ENCODE measurements at regions of chrX and their contacts with region 1.

Region 1: DNA sequence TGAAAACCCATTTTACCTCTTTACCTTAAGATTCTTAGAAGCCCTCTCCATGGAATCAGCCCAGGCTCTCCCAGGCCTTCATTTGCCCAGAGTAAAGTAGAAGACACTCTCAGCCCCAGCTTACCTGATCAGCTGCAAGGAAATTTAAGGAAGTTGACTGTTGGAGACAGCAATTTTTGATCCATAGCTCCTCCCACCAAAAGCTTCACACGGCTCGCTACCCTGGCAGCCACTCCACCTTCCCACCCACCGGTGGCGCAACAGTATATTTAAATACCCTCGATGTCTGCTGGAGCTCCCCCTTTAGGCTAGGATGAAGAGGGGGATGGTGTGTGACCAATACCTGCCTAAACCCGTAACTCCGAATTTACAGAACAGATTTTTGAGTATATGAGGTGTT is 75.4 kb downstream of the MBNL3 start:
- DNase-seq: peak; percentile 74
- H3K4me3 ChIP-seq: peak overlapping the region; percentile 32
- H3K4me3 Mint-ChIP-seq: peak overlapping the region; percentile 73
- H3K27ac Mint-ChIP-seq: peak overlapping the region; percentile 93
- H3K4me1 ChIP-seq: peaks cover 28% of the 10 kb centered on the region
- H3K4me1 Mint-ChIP-seq: peaks cover 8% of the 10 kb centered on the region
- H3K27me3 ChIP-seq: no peaks in the 10 kb centered on the region
- H3K27me3 Mint-ChIP-seq: no peaks in the 10 kb centered on the region
- CTCF ChIP-seq: peak; percentile 34 to 43

Region 2: DNA sequence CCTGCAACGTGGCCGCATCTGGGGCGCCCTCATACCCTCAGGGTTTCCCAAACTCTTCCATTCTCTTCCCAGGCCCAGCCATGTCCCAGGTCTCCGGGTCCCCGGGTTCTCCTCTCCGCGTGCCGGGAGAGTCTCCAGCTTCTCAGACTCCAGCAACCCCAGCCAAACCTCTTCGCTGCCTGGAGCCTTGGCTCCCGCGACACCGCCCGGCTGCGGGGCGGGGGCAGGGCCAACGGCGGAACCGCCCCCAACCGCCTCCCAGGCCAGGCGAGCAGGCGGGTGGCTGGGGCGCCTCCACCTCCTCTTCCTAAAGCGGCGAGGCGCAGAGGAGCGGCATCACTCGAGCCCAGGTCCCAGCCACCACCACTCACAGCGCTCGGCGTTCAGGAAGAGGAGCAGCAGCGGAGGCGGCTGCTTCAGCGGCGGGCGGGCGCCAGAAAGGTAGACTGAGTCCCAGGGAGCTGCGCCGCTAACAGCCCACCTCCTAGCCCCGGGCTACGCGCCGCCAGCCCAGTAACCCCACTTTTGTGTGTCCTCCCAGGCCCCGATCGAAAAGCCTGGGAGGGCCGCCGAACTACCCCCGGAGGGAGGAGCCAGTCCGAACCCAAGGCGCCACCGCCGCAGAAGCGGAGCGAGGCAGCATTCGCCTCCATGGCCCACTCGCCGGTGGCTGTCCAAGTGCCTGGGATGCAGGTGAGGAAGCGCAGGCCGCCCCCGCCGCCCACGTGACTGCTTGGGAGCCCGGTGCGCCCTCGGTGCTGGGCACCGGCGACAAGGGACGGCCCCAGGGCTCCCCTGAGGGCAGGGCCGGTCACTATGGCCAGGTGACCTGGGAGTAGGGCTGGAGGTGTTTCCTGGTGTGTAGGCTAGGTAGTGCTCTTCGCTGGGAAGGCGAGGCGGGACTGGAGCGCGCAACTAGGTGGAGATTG is 390.2 kb before region 1 on chrX and contains the start of gene STK26:
- CTCF ChIA-PET with region 1: no interaction called
- POLR2A ChIA-PET with region 1: no interaction called
- intact Hi-C with region 1: loop called (anchors 2 kb)
- DNase-seq: peak; percentile 79 to 86
- H3K4me3 ChIP-seq: peak within 1 kb of the TSS; percentile 79
- H3K4me3 Mint-ChIP-seq: peak within 1 kb of the TSS; percentile 88
- H3K27ac Mint-ChIP-seq: peak within 1 kb of the TSS; percentile 89
- H3K4me1 ChIP-seq: peaks cover 3% of the 10 kb centered on the region; the same call in 1 of the 2 replicates
- H3K4me1 Mint-ChIP-seq: peaks cover 13% of the 10 kb centered on the region
- H3K27me3 ChIP-seq: no peaks in the 10 kb centered on the region
- H3K27me3 Mint-ChIP-seq: no peaks in the 10 kb centered on the region
- CTCF ChIP-seq: no peak
- total RNA-seq, gene STK26: 36.8 and 37.1 TPM in 2 replicates

Region 3: GRCh38 chrX:132226169-132226568 is 187.3 kb before region 1 on chrX:
- CTCF ChIA-PET with region 1: interaction called, 3 read pairs
- POLR2A ChIA-PET with region 1: no interaction called
- intact Hi-C with region 1: loop called (anchors 5 kb)
- DNase-seq: no peak
- H3K4me3 ChIP-seq: no peak overlapping the region
- H3K4me3 Mint-ChIP-seq: no peak overlapping the region
- H3K27ac Mint-ChIP-seq: no peak overlapping the region
- H3K4me1 ChIP-seq: no peaks in the 10 kb centered on the region
- H3K4me1 Mint-ChIP-seq: peaks cover 10% of the 10 kb centered on the region
- H3K27me3 ChIP-seq: no peaks in the 10 kb centered on the region
- H3K27me3 Mint-ChIP-seq: no peaks in the 10 kb centered on the region
- CTCF ChIP-seq: peak; percentile 32 to 34

Region 4: GRCh38 chrX:132330117-132330729 is 83.2 kb before region 1 on chrX:
- CTCF ChIA-PET with region 1: no interaction called
- POLR2A ChIA-PET with region 1: no interaction called
- intact Hi-C with region 1: loop called (anchors 1 kb)
- DNase-seq: peak; percentile 11 to 33
- H3K4me3 ChIP-seq: no peak overlapping the region
- H3K4me3 Mint-ChIP-seq: no peak overlapping the region
- H3K27ac Mint-ChIP-seq: no peak overlapping the region
- H3K4me1 ChIP-seq: peaks cover 26% of the 10 kb centered on the region
- H3K4me1 Mint-ChIP-seq: peaks cover 33% of the 10 kb centered on the region
- H3K27me3 ChIP-seq: no peaks in the 10 kb centered on the region
- H3K27me3 Mint-ChIP-seq: no peaks in the 10 kb centered on the region
- CTCF ChIP-seq: no peak

Region 5: DNA sequence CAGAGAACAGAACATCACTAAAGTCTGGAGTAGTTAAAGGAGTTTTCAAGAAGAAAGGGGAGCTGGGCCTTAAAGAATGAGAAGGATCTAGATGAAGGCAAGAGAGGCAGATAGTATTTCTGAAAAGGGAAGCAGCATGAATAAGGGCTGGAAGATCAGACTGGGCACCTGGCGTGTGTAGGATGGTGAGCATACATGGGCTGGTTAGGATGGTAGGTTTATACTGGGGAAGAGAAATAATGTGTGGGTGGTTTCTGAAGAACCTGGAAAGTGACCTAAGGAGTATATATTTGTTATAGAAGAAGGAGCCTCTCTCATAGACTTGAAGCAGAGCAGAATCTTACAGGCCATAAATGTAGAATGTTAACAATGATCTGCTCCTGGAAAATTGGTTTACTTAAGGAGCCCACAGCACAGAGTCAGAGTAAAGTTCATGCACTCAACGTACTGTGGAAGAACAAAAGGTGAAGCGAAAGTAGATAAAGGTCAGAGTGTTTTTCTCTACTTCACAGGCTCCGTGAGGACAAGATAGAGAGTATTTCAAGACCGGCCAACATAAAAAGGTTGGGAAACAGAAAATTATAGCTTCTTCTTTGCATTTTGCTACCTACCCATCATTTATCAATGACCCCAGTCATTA is 39.6 kb after region 1 on chrX:
- CTCF ChIA-PET with region 1: interaction called, 5 read pairs
- POLR2A ChIA-PET with region 1: no interaction called
- intact Hi-C with region 1: loop called (anchors 5 kb)
- DNase-seq: peak in 1 of 2 experiments; percentile 1
- H3K4me3 ChIP-seq: no peak overlapping the region
- H3K4me3 Mint-ChIP-seq: peak overlapping the region; percentile 43
- H3K27ac Mint-ChIP-seq: peak overlapping the region; percentile 63
- H3K4me1 ChIP-seq: peaks cover 9% of the 10 kb centered on the region; the same call in 1 of the 2 replicates
- H3K4me1 Mint-ChIP-seq: peaks cover 8% of the 10 kb centered on the region
- H3K27me3 ChIP-seq: no peaks in the 10 kb centered on the region
- H3K27me3 Mint-ChIP-seq: no peaks in the 10 kb centered on the region
- CTCF ChIP-seq: no peak

Region 6: GRCh38 chrX:132488819-132489577 is 75.5 kb after region 1 on chrX and contains the start of gene MBNL3:
- CTCF ChIA-PET with region 1: interaction called, 7 read pairs
- POLR2A ChIA-PET with region 1: interaction called, 3 read pairs
- intact Hi-C with region 1: loop called (anchors 1 kb)
- DNase-seq: peak; percentile 71
- H3K4me3 ChIP-seq: peak within 1 kb of the TSS; percentile 74
- H3K4me3 Mint-ChIP-seq: peak within 1 kb of the TSS; percentile 88
- H3K27ac Mint-ChIP-seq: peak within 1 kb of the TSS; percentile 63
- H3K4me1 ChIP-seq: peaks cover 18% of the 10 kb centered on the region; the same call in 1 of the 2 replicates
- H3K4me1 Mint-ChIP-seq: no peaks in the 10 kb centered on the region
- H3K27me3 ChIP-seq: no peaks in the 10 kb centered on the region
- H3K27me3 Mint-ChIP-seq: no peaks in the 10 kb centered on the region
- CTCF ChIP-seq: no peak
- total RNA-seq, gene MBNL3: 174 and 195 TPM in 2 replicates

Region 7: GRCh38 chrX:132592880-132593279 is 179.4 kb after region 1 on chrX:
- CTCF ChIA-PET with region 1: interaction called, 5 read pairs
- POLR2A ChIA-PET with region 1: no interaction called
- intact Hi-C with region 1: loop called (anchors 2 kb)
- DNase-seq: peak; percentile 23 to 31
- H3K4me3 ChIP-seq: no peak overlapping the region
- H3K4me3 Mint-ChIP-seq: no peak overlapping the region
- H3K27ac Mint-ChIP-seq: no peak overlapping the region
- H3K4me1 ChIP-seq: peaks cover 20% of the 10 kb centered on the region
- H3K4me1 Mint-ChIP-seq: no peaks in the 10 kb centered on the region
- H3K27me3 ChIP-seq: no peaks in the 10 kb centered on the region
- H3K27me3 Mint-ChIP-seq: no peaks in the 10 kb centered on the region
- CTCF ChIP-seq: peak; percentile 41 to 52

Region 8: GRCh38 chrX:132631579-132632232 is 218.2 kb after region 1 on chrX:
- CTCF ChIA-PET with region 1: no interaction called
- POLR2A ChIA-PET with region 1: no interaction called
- intact Hi-C with region 1: no loop called
- DNase-seq: peak in 1 of 2 experiments; percentile 16
- H3K4me3 ChIP-seq: no peak overlapping the region
- H3K4me3 Mint-ChIP-seq: no peak overlapping the region
- H3K27ac Mint-ChIP-seq: no peak overlapping the region
- H3K4me1 ChIP-seq: no peaks in the 10 kb centered on the region
- H3K4me1 Mint-ChIP-seq: no peaks in the 10 kb centered on the region
- H3K27me3 ChIP-seq: no peaks in the 10 kb centered on the region
- H3K27me3 Mint-ChIP-seq: no peaks in the 10 kb centered on the region
- CTCF ChIP-seq: peak; percentile 32 to 35

Measured in Caco-2 (cell line).